Transverse colon (tissue), 4 donors: ENCODE measurements at regions of chr1 and their contacts with region 1.

Region 1: GRCh38 chr1:161201828-161202725 is at the start of gene NDUFS2:
- DNase-seq: peak; percentile 99
- H3K4me3 ChIP-seq: peak within 1 kb of the TSS; percentile 66 to 91 (median 78)
- H3K27ac ChIP-seq: peak within 1 kb of the TSS; percentile 90 to 98 (median 94)
- H3K4me1 ChIP-seq: peaks cover 40 to 82% (median 55%) of the 10 kb centered on the region in 4 donors
- H3K27me3 ChIP-seq: no peaks in the 10 kb centered on the region
- CTCF ChIP-seq: peak in 2 of 5 experiments; percentile 5 to 16
- EP300 ChIP-seq: no peak
- POLR2A ChIP-seq: peak; percentile 84
- total RNA-seq, gene NDUFS2: 82.6 to 209 (median 144) TPM

Region 2: DNA sequence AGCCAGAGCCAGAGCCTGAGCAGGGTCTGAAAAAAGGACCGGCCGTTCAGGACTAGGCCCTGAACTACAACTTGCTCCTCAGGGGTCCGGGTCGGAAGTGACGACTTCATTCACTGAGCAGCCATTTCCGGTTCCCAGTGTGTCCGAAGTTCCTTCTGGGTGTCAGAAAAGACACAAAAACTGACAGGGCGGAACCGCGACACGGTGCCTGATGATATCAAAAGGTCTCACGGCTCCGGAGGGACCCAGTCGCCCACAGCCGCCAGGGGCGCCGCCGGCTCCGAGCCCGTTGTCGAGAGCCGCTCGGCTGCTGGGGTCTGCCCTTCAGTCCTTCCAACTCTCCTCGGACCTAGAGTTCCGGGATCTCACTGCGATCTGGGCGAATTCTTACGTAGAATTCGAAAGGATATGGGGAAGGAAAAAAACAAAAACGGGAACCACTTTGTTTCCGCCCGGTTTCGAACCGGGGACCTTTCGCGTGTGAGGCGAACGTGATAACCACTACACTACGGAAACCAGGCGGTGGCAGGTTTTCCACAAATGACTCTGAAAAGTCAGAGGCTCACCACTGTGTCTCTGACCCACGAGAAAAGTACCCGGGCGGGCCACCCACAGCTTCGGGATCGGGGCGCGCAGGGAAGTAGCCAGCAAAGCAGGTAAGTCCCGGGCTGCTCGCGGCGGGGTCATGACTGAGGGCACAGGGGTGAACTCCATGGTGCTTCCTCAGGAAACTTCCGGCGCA is 197.4 kb after region 1 on chr1:
- in situ Hi-C with region 1: loop called in 1 of 4 experiments (anchors 25 kb)
- intact Hi-C with region 1: no loop called
- DNase-seq: peak; percentile 91
- H3K4me3 ChIP-seq: peak overlapping the region; percentile 49 to 92 (median 77)
- H3K27ac ChIP-seq: peak overlapping the region; percentile 98 to 100 (median 100)
- H3K4me1 ChIP-seq: peaks cover 9 to 20% (median 11%) of the 10 kb centered on the region in 4 donors
- H3K27me3 ChIP-seq: no peaks in the 10 kb centered on the region
- CTCF ChIP-seq: peak; percentile 40 to 79 (median 54)
- EP300 ChIP-seq: no peak
- POLR2A ChIP-seq: peak; percentile 74